ENCODE measurements at regions of chr14 and their contacts with region 1.

Region 1: DNA sequence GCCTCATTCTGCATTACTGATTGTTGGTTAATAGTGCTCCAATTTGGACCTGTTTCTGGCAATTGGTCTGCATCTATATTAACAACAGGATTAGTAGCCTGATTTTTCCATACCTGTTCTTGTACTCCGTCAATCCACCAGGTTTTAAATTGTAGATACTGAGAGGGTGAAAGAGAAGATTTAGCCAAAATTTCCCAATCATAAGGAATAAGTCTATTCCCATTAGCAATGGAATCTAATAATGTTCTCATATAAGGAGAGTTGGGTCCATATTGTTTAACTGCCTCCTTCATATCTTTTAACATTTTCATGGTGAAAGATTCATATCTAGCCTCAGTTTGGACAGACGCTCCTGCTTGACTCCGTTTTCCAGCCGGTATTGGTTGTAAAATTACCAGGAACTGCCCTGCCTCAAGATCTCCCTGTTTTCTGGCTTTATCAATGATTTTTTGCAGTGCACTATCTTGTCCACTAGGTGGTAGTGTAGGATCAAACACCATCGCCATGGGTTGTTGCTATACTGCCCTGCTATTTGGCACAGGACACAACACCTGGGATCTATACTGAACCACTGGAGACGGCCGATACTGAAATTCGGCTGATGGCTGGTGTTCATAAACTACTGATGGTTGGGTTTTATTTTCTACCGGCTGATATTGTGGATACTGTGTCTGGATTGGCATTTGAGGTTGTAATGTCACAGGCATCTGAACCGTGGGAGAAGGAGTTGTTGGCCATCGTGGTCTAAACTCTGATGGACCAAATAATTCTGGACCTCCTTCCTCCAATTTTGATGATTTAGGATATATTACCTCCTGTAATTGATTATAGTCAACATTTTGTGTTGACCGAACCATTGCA is 25.2 kb downstream of the DHRS4L2 start:
- DNase-seq: peak in 3 of 5 donors; percentile 29 to 43 (median 35)
- ATAC-seq: peak; percentile 73 to 83 (median 82)
- H3K4me3 ChIP-seq: no peak overlapping the region
- H3K27ac ChIP-seq: no peak overlapping the region
- H3K4me1 ChIP-seq: peaks cover 0 to 10% (median 2%) of the 10 kb centered on the region in 12 donors
- H3K27me3 ChIP-seq: no peaks in the 10 kb centered on the region
- CTCF ChIP-seq: peak; percentile 85 to 97 (median 90)
- POLR2A ChIP-seq: no peak

Region 2: DNA sequence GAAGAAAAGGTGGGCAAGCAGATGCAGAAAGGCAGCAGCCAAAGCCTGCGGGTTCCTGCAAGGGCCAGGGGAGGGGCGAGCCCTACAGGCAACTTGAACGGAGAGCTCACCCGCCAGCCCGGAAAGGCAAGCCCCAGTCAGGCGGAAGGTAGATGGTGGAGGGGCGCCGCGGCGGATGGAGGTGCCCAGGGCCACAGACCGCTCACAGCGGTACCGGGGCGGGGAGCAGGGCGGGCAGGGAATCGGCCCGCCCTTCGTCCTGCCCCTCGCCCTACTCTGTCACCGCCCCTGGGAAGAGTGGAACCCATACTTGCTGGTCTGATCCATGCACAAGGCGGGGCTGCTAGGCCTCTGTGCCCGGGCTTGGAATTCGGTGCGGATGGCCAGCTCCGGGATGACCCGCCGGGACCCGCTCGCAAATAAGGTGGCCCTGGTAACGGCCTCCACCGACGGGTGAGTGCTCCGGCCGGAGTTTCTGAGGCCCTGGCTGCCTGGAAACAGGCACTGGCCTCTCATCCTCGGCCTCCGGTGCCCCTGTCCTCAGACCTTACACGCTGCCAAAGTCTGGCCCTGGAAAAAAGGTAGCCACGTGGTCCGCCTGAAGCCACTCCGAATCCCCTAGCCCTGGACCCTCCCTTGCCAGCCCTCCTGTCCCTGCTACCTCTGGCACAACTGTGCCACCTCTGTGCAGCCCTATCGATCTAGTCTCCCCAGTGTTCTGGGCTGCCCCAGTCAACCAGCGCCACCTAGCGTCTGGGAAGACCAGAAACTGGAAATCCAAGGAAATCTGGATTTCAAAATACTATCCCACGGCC is 60.2 kb before region 1 on chr14 and contains the start of gene DHRS4:
- intact Hi-C with region 1: loop called in 1 of 10 experiments (anchors 10 kb)
- DNase-seq: peak; percentile 84 to 91 (median 86)
- ATAC-seq: peak; percentile 98 to 99 (median 99)
- H3K4me3 ChIP-seq: peak within 1 kb of the TSS; percentile 49 to 92 (median 84)
- H3K27ac ChIP-seq: peak within 1 kb of the TSS; percentile 19 to 95 (median 88)
- H3K4me1 ChIP-seq: peaks cover 0 to 27% (median 11%) of the 10 kb centered on the region in 12 donors
- H3K27me3 ChIP-seq: no peaks in the 10 kb centered on the region
- CTCF ChIP-seq: peak; percentile 74 to 94 (median 88)
- POLR2A ChIP-seq: peak in 1 of 2 donors; percentile 53
- total RNA-seq, gene DHRS4: 20.3 to 48.5 (median 30.3) TPM

Region 3: DNA sequence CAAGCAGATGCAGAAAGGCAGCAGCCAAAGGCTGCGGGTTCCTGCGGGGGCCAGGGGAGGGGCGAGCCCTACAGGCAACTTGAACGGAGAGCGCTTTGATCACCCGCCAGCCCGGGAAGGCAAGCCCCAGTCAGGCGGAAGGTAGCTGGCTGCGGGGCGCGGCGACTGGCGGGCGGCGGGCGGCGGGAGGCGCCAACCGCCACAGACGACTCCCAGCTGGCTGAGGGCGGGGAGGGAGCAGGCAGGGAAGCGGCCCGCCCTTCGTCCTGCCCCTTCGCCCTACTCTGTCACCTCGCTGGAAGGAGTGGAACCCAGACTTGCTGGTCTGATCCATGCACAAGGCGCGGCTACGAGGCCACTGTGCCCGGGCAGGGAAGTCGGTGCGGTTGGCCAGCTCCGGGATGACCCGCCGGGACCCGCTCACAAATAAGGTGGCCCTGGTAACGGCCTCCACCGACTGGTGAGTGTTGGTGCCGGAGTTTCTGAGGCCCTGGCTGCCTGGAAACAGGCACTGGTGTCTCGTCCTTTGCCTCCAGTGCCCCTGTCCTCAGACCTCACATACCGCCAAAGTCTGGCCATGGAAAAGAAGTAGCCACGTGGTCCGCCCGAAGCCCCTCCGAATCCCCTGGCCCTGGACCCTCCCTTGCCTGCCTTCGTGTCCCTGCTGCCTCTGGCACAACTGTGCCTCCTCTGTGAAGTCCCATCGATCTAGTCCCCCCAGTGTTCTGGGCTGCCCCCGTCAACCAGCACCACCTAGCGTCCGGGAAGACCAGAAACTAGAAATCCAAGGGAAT is 22.5 kb after region 1 on chr14:
- intact Hi-C with region 1: loop called in 4 of 10 experiments (anchors 1 to 2 kb)
- DNase-seq: peak; percentile 81 to 91 (median 86)
- ATAC-seq: peak; percentile 91 to 97 (median 96)
- H3K4me3 ChIP-seq: peak overlapping the region; percentile 46 to 82 (median 66)
- H3K27ac ChIP-seq: peak overlapping the region; percentile 83 to 97 (median 92)
- H3K4me1 ChIP-seq: peaks cover 0 to 18% (median 3%) of the 10 kb centered on the region in 12 donors
- H3K27me3 ChIP-seq: no peaks in the 10 kb centered on the region
- CTCF ChIP-seq: peak; percentile 61 to 90 (median 72)
- POLR2A ChIP-seq: peak in 1 of 2 donors; percentile 28

Region 4: DNA sequence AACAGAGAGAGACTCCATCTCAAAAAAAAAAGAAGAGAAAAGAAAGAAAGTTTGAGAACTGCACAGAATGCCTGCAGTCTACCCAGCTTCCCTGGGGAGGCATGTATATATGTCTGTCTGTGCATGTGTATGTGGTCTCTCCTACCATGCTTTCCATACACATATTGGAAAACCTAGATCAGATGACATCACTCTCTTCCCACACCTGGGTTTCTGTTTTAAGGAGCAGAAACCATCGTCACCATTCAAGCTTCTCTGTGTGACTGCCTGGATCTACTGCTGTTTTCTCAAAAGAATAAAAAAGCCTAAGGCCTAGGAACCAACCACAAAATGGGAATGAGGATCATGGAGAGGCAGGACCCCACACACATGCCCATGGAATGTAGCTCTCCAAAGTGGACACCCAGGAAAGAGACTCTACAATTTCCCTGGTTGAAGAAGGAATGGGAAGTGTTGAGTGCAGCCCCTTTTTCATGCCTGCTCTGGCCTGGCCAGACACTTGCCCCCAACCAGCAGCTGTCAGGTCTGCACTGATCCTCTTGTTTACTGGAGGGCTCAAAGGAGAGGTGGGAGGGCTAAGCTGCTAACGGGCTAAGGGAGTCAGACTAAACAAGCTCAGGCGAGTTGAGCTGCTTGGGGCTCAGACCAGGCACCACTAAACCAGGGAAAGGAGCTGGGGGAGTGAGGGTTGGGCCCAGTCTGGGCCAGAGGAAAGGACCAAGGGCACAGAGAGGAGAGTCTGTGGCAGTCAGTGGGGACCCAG is 72.5 kb after region 1 on chr14:
- intact Hi-C with region 1: loop called in 6 of 10 experiments (anchors 1 to 5 kb)
- DNase-seq: no peak
- ATAC-seq: no peak
- H3K4me3 ChIP-seq: no peak overlapping the region
- H3K27ac ChIP-seq: no peak overlapping the region
- H3K4me1 ChIP-seq: peaks cover 0 to 6% (median 4%) of the 10 kb centered on the region in 12 donors
- H3K27me3 ChIP-seq: peaks cover 0 to 10% (median 0%) of the 10 kb centered on the region in 9 donors
- CTCF ChIP-seq: no peak
- POLR2A ChIP-seq: no peak

Region 5: GRCh38 chr14:24093901-24094761 is 80.2 kb after region 1 on chr14 and contains the start of gene PCK2:
- intact Hi-C with region 1: loop called in 6 of 10 experiments (anchors 1 to 5 kb)
- DNase-seq: peak; percentile 85 to 94 (median 91)
- ATAC-seq: peak; percentile 76 to 92 (median 90)
- H3K4me3 ChIP-seq: peak within 1 kb of the TSS; percentile 73 to 94 (median 80)
- H3K27ac ChIP-seq: peak within 1 kb of the TSS; percentile 77 to 96 (median 94)
- H3K4me1 ChIP-seq: peaks cover 0 to 26% (median 14%) of the 10 kb centered on the region in 12 donors
- H3K27me3 ChIP-seq: no peaks in the 10 kb centered on the region
- CTCF ChIP-seq: peak in 1 of 12 donors; percentile 14
- POLR2A ChIP-seq: peak in 1 of 2 donors; percentile 62
- total RNA-seq, gene PCK2: 2.1 to 14.6 (median 3.9) TPM

Region 6: GRCh38 chr14:24108336-24108874 is 94.5 kb after region 1 on chr14:
- intact Hi-C with region 1: loop called in 4 of 10 experiments (anchors 2 to 5 kb)
- DNase-seq: no peak
- ATAC-seq: no peak
- H3K4me3 ChIP-seq: no peak overlapping the region
- H3K27ac ChIP-seq: peak overlapping the region in 3 of 12 donors; percentile 7 to 63 (median 44)
- H3K4me1 ChIP-seq: peaks cover 0 to 22% (median 8%) of the 10 kb centered on the region in 12 donors
- H3K27me3 ChIP-seq: no peaks in the 10 kb centered on the region
- CTCF ChIP-seq: no peak
- POLR2A ChIP-seq: no peak